PC-9 (cell line): ENCODE measurements at regions of chr2 and their contacts with region 1.

Region 1: GRCh38 chr2:227939271-227940027 is 68.0 kb downstream of the DAW1 start:
- DNase-seq: no peak
- H3K4me3 ChIP-seq: no peak overlapping the region
- H3K27ac ChIP-seq: no peak overlapping the region
- H3K4me1 ChIP-seq: no peaks in the 10 kb centered on the region
- H3K27me3 ChIP-seq: no peaks in the 10 kb centered on the region
- CTCF ChIP-seq: peak; percentile 71

Region 2: DNA sequence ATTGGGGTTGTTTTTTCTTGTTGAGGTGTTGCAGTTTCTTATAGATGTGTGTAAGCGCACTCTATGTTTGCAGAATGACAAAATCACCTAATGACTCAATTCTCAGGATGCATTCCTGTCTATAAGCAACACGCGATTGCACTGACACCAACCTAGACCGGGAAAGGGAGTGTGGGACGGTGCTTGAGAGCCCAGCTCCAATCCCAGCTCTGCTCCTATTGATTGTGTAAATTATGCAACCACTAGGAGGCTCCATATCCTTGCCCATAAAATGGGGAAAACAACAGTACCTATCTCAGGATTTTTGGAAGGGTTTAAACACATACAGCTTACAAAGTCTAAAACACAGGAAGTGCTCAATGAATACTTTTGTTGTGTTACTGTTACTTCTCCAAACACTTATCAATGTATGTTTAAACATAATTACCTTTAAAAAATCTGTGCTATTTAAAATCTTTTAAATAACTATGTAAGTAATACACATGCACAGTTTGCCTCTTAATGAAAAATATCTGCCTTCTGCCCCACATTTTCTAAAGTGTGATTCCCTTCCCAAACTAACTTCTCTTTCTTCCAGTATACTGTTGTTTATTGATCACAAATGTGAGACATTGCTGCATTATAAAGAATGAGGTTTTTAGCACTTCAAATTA is 109.5 kb after region 1 on chr2:
- CTCF ChIA-PET with region 1: no interaction called
- POLR2A ChIA-PET with region 1: no interaction called
- intact Hi-C with region 1: loop called (anchors 10 kb)
- DNase-seq: peak; percentile 30 to 70
- H3K4me3 ChIP-seq: no peak overlapping the region
- H3K27ac ChIP-seq: no peak overlapping the region
- H3K4me1 ChIP-seq: peaks cover 12% of the 10 kb centered on the region
- H3K27me3 ChIP-seq: no peaks in the 10 kb centered on the region
- CTCF ChIP-seq: peak; percentile 67